ENCODE measurements at regions of chr12 and their contacts with region 1.

Region 1: DNA sequence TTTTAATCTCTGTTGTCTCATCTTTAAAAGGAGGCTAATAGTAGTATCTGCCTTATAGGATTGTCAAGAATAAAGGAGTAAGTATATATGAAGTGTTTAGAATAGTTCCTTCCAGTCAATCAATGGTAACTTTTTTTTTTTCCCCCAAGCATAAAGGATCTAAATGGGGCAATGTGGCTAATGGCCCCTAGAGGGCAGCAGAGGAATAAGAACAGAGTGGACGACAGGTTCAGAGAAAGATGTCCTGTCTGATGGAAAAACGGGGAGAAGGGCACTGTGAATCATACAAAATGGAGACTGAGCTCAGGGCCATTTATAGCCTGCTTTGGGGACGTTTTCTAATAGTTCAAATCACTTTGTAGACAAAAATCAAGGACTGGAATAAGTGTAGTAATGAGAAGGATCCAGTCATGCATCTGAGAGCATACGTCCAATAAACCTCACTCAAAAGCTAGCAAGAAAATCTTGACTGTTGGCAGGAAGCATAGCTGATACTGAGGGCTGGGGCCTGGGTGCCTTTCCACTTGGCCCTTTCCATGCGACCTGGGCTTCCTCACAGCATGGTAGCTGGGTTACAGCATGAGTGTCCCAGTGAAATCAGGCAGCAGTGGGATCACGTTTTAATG is 51.3 kb downstream of the IFNG-AS1 start:
- DNase-seq: peak in 7 of 10 donors; percentile 43 to 83 (median 57)
- H3K4me3 ChIP-seq: no peak overlapping the region
- H3K27ac ChIP-seq: no peak overlapping the region
- H3K27me3 ChIP-seq: no peaks in the 10 kb centered on the region
- CTCF ChIP-seq: peak; percentile 70 to 96 (median 86)

Region 2: GRCh38 chr12:68158432-68158831 is 117.9 kb after region 1 on chr12:
- intact Hi-C with region 1: loop called in 1 of 2 experiments (anchors 5 kb)
- DNase-seq: no peak
- H3K4me3 ChIP-seq: no peak overlapping the region
- H3K27ac ChIP-seq: no peak overlapping the region
- H3K27me3 ChIP-seq: peaks cover 0 to 5% (median 0%) of the 10 kb centered on the region in 45 donors
- CTCF ChIP-seq: peak in 43 of 56 donors; percentile 10 to 57 (median 32)

Region 3: DNA sequence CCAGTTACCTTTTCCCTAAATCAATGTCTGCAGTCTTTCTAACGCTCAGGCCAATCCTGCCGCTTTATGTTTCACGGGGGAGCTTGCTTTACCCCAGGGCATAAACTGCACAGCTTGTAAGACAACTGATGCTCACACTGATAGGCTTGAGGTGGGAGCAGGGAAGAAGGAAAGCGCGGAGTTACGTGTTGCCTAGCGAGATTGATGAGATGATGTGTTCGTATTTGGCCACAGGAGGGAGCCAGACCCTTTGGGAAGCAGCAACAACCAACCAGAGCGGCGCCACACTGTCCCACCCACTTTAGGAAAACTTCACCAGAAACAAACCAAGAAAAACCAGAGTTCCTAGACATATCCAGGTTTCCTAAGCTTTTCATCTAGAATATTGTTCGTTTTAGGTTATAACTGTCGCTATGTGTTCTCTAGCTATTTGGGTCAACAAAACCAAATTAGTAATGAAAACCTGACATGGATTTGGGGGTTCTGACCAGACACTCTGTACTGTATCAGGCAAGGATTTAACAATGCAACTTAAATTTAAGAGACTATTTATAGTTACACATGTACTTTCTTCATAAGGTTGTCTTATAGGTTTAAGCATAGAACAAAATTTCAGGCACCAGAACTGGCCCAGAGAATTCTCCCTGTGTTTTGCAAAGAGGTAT is 182.7 kb after region 1 on chr12:
- intact Hi-C with region 1: loop called in 1 of 2 experiments (anchors 10 kb)
- DNase-seq: peak; percentile 43 to 87 (median 74)
- H3K4me3 ChIP-seq: peak overlapping the region in 44 of 59 donors; percentile 8 to 52 (median 33)
- H3K27ac ChIP-seq: no peak overlapping the region
- H3K27me3 ChIP-seq: no peaks in the 10 kb centered on the region
- CTCF ChIP-seq: peak; percentile 51 to 91 (median 84)

Region 4: DNA sequence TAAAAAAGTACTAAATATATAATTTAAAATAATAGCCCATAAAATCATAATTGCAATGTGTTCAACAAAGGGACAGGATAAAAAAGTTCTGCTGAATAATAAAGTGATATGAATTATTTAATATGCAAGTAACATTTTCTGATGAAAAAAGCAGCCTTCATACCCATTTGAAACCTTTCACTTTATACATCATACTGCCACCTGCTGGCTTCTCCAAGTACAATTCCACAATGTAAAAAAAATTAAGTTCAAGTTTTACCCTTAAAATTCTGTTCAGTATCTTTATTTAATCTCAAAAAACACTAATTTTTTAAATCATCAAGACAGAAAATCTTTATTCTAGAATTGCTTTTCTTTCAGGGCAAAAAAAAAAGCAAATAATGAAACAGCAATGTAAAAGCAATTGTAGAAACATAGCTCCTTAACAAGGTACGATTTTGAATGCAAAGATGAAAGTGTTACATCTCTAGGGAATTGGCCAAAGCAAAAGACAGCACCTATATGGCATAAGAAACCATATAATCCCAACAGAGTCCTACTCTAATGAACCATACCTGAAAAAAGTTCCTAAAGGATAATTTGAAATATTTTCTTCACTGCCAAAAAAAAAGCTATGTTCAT is 276.6 kb after region 1 on chr12:
- intact Hi-C with region 1: loop called (anchors 2 to 10 kb)
- DNase-seq: peak in 1 of 10 donors; percentile 21
- H3K4me3 ChIP-seq: no peak overlapping the region
- H3K27ac ChIP-seq: no peak overlapping the region
- H3K27me3 ChIP-seq: no peaks in the 10 kb centered on the region
- CTCF ChIP-seq: peak; percentile 67 to 91 (median 81)

Measured in dorsolateral prefrontal cortex (tissue), 120 donors.